ENCODE measurements at regions of chr17 and their contacts with region 1.

Region 1: GRCh38 chr17:979538-980405 is at the start of gene NXN:
- DNase-seq: peak; percentile 80 to 94 (median 90)
- ATAC-seq: peak; percentile 73
- H3K4me3 ChIP-seq: peak within 1 kb of the TSS; percentile 67
- H3K4me3 Mint-ChIP-seq: peak within 1 kb of the TSS; percentile 91
- H3K27ac ChIP-seq: peak within 1 kb of the TSS in 1 of 2 donors; percentile 21
- H3K27ac Mint-ChIP-seq: peak within 1 kb of the TSS; percentile 56
- H3K4me1 ChIP-seq: peaks cover 23% of the 10 kb centered on the region
- H3K4me1 Mint-ChIP-seq: peaks cover 17% of the 10 kb centered on the region
- H3K27me3 ChIP-seq: peaks cover 24 to 39% of the 10 kb centered on the region in 2 experiments
- H3K27me3 Mint-ChIP-seq: peaks cover 37% of the 10 kb centered on the region
- CTCF ChIP-seq: no peak
- total RNA-seq, gene NXN: 0.80 to 0.98 TPM

Region 2: GRCh38 chr17:143782-144281 is 835.9 kb before region 1 on chr17:
- CTCF ChIA-PET with region 1: no interaction called
- POLR2A ChIA-PET with region 1: no interaction called
- intact Hi-C with region 1: loop called in 1 of 2 experiments (anchors 2 kb)
- DNase-seq: peak; percentile 69 to 92 (median 84)
- ATAC-seq: peak; percentile 97
- H3K4me3 ChIP-seq: no peak overlapping the region
- H3K4me3 Mint-ChIP-seq: no peak overlapping the region
- H3K27ac ChIP-seq: no peak overlapping the region
- H3K27ac Mint-ChIP-seq: no peak overlapping the region
- H3K4me1 ChIP-seq: peaks cover 5% of the 10 kb centered on the region
- H3K4me1 Mint-ChIP-seq: no peaks in the 10 kb centered on the region
- H3K27me3 ChIP-seq: no peaks in the 10 kb centered on the region
- H3K27me3 Mint-ChIP-seq: no peaks in the 10 kb centered on the region
- CTCF ChIP-seq: peak; percentile 86

Region 3: DNA sequence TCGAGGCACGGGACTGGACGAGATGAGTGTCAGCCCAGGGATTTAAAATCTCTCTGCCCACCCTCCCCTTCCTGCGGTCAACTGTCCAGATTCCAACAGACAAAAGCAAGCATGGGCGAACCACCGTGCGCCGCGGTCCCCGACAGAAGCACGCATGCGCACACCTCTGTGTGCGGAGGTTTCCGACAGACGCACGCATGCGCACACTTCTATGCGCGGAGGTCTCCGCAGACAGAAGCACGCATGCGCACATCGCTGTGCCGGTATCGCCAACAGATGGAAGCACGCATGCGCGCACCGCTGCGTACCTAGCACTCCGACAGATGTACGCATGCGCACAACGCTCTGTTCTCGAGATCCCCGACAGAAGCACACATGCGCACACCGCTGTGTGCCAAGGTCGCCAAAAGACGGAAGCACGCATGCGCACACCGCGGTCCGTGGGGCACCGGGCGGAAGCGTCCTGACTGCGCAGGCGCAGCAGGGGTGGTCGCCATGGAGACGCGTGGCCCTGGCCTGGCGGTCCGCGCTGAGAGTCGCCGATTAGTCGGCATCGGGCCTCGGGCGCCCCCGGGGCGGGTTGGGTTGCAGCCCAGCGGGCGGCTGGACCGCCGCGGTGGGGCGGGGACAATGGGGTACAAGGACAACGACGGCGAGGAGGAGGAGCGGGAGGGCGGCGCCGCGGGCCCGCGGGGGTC is 569.8 kb before region 1 on chr17:
- CTCF ChIA-PET with region 1: interaction called, 12 read pairs
- POLR2A ChIA-PET with region 1: interaction called, 8 read pairs
- intact Hi-C with region 1: loop called (anchors 2 kb)
- DNase-seq: peak; percentile 98 to 100 (median 99)
- ATAC-seq: peak; percentile 15
- H3K4me3 ChIP-seq: peak overlapping the region; percentile 86
- H3K4me3 Mint-ChIP-seq: peak overlapping the region; percentile 91
- H3K27ac ChIP-seq: peak overlapping the region; percentile 88 to 95
- H3K27ac Mint-ChIP-seq: peak overlapping the region; percentile 96
- H3K4me1 ChIP-seq: peaks cover 63% of the 10 kb centered on the region
- H3K4me1 Mint-ChIP-seq: peaks cover 58% of the 10 kb centered on the region
- H3K27me3 ChIP-seq: no peaks in the 10 kb centered on the region
- H3K27me3 Mint-ChIP-seq: peaks cover 4% of the 10 kb centered on the region
- CTCF ChIP-seq: no peak

Region 4: GRCh38 chr17:781805-782731 is 197.7 kb before region 1 on chr17 and contains the starts of genes GLOD4 and MRM3:
- CTCF ChIA-PET with region 1: interaction called, 9 read pairs
- POLR2A ChIA-PET with region 1: interaction called, 20 read pairs
- intact Hi-C with region 1: loop called in 1 of 2 experiments (anchors 1 kb)
- DNase-seq: peak; percentile 86 to 98 (median 94)
- ATAC-seq: peak; percentile 91
- H3K4me3 ChIP-seq: peak within 1 kb of the TSS; percentile 71
- H3K4me3 Mint-ChIP-seq: peak within 1 kb of the TSS; percentile 100
- H3K27ac ChIP-seq: peak within 1 kb of the TSS; percentile 93 to 94
- H3K27ac Mint-ChIP-seq: peak within 1 kb of the TSS; percentile 99
- H3K4me1 ChIP-seq: peaks cover 27% of the 10 kb centered on the region
- H3K4me1 Mint-ChIP-seq: peaks cover 40% of the 10 kb centered on the region
- H3K27me3 ChIP-seq: no peaks in the 10 kb centered on the region
- H3K27me3 Mint-ChIP-seq: no peaks in the 10 kb centered on the region
- CTCF ChIP-seq: no peak
- total RNA-seq, gene GLOD4: 88.0 to 89.3 TPM
- total RNA-seq, gene MRM3: 40.8 to 44.1 TPM

Region 5: GRCh38 chr17:879549-880442 is 100.0 kb before region 1 on chr17:
- CTCF ChIA-PET with region 1: interaction called, 14 read pairs
- POLR2A ChIA-PET with region 1: interaction called, 14 read pairs
- intact Hi-C with region 1: loop called (anchors 1 kb)
- DNase-seq: peak; percentile 45 to 86 (median 62)
- ATAC-seq: peak; percentile 65
- H3K4me3 ChIP-seq: no peak overlapping the region
- H3K4me3 Mint-ChIP-seq: no peak overlapping the region
- H3K27ac ChIP-seq: no peak overlapping the region
- H3K27ac Mint-ChIP-seq: no peak overlapping the region
- H3K4me1 ChIP-seq: peaks cover 10% of the 10 kb centered on the region
- H3K4me1 Mint-ChIP-seq: peaks cover 6% of the 10 kb centered on the region
- H3K27me3 ChIP-seq: peaks cover 2 to 5% of the 10 kb centered on the region in 2 experiments
- H3K27me3 Mint-ChIP-seq: peaks cover 46% of the 10 kb centered on the region
- CTCF ChIP-seq: peak; percentile 69

Region 6: GRCh38 chr17:1179818-1180742 is 200.3 kb after region 1 on chr17 and contains the start of gene ABR:
- CTCF ChIA-PET with region 1: no interaction called
- POLR2A ChIA-PET with region 1: no interaction called
- intact Hi-C with region 1: loop called in 1 of 2 experiments (anchors 2 kb)
- DNase-seq: peak; percentile 40 to 81 (median 58)
- ATAC-seq: peak; percentile 80
- H3K4me3 ChIP-seq: peak within 1 kb of the TSS; percentile 75
- H3K4me3 Mint-ChIP-seq: peak within 1 kb of the TSS; percentile 84
- H3K27ac ChIP-seq: no peak within 1 kb of the TSS
- H3K27ac Mint-ChIP-seq: no peak within 1 kb of the TSS
- H3K4me1 ChIP-seq: peaks cover 29% of the 10 kb centered on the region
- H3K4me1 Mint-ChIP-seq: no peaks in the 10 kb centered on the region
- H3K27me3 ChIP-seq: peaks cover 0 to 4% of the 10 kb centered on the region in 2 experiments
- H3K27me3 Mint-ChIP-seq: no peaks in the 10 kb centered on the region
- CTCF ChIP-seq: no peak
- total RNA-seq, gene ABR: 72.4 to 74.8 TPM

Measured in CD4-positive, alpha-beta T cell (primary cell).